Activated naive CD8-positive, alpha-beta T cell treated with anti-CD3 and anti-CD28 coated beads, Interleukin-2, amount 10 ng/mL, durations not matched to agents 7 days and 5 days (primary cell): ENCODE measurements at regions of chr2 and their contacts with region 1.

Region 1: DNA sequence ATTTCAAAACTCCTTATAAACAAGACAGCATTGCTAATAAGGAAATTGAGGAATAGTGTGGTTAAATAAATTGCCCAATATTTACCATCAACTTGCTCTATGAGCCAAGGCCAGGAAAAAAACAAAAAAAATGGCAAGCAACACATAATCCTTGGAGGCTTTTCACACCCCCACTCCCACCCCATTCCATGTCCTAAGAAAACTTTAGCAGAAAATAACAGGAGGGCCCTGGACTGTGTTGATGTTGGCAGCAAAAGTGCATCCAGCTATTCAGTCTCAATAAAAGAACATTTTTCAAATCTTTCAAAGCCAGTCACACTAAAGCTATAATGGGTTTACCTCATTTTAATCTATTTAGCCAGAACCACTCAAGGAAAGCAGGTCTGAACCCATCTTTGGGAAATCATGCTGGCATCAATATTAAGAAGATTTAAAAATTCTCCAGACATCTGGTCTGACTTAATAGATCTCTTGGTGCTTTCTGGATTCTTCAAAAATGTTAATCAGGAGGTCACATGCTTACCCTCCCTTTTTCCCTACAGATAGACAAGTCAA is 34.6 kb upstream of the STK17B start:
- DNase-seq: no peak
- ATAC-seq: no peak
- H3K4me3 Mint-ChIP-seq: no peak overlapping the region
- H3K27ac Mint-ChIP-seq: no peak overlapping the region
- H3K4me1 Mint-ChIP-seq: peaks cover 30% of the 10 kb centered on the region
- H3K27me3 Mint-ChIP-seq: no peaks in the 10 kb centered on the region

Region 2: DNA sequence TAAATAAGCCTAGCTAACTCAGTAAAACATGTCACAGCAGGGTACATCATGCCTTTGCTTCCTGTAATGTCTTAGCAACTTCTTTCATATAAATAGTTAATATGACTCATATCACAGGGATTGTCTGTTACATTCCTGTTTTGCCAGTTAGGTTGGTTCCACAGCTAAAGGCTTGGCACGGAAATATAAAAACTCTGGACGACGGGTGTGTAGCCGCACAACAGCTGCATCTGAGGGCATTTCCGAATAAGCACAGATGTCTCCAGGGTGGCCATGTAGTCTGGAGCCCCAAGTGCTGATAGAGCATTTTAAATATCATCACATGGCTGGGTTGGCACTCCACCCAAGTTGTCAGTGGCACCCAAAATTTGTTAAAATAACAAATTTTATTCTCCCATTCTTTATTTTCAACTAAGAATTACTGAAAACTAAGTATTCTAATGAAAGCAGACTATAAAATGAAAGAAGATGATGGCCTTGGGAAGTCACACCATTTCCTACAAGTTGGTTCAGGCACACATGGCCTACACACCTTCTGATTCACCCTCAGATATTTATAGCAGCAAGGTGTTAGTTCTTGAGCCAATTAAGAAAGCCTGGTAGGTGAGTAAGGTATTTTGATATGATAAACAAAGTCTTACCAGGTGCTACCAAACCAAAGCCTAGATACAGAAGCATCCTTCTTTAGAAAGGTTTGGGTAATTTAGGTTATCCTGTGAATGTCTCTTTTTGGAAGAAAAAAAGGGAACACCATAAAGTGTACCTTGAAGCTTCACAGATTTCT is 27.3 kb after region 1 on chr2:
- POLR2A ChIA-PET with region 1: interaction called, 14 read pairs
- DNase-seq: no peak
- ATAC-seq: no peak
- H3K4me3 Mint-ChIP-seq: peak overlapping the region; percentile 55
- H3K27ac Mint-ChIP-seq: peak overlapping the region; percentile 88
- H3K4me1 Mint-ChIP-seq: peaks cover 82% of the 10 kb centered on the region
- H3K27me3 Mint-ChIP-seq: no peaks in the 10 kb centered on the region

Region 3: DNA sequence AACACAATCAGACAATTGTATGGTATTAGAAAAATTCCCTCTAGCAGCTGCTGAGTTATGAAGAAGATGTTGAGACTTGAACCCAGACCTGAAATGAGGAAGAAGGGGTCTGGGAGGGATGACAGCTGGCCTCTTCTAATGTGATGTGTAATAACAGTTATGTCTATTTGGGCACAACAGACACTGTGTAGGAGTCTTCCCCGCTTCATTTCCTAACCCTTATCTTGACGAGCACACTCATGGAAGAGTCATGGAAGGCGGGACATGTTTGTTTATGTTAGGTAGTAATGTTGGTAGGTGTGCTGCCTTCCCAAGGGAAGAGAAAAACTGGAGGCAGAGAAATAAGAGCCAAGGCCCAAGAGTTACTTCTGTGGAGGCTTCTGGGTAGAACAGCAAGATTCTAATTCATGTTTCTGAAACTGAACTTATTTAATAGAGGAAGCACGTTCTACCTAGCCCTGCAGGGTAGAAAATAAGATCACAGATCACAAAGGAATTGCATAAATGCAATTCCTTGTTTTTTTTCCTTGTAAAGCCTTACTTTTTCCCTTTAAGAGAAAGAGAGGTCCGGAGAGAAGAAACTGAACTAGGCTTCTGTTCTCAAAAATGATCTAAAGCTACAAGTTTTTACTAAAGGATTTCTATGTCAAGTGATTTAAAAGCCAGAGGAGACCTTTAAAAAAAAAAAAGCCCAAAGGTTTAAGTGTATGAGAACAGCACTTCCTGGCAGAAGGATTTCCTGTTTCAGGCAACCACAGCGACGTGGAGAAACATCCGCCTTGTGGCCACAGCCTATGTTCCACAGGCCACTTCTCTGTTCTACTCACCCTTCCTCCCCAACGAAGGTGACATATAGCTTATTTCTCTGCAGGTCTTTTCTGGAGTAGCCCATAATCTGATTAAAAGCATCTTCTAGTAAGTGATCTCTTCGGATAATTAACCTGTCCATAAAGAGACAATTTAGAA is 33.9 kb after region 1 on chr2:
- POLR2A ChIA-PET with region 1: interaction called, 14 read pairs
- DNase-seq: peak; percentile 80
- ATAC-seq: peak; percentile 62
- H3K4me3 Mint-ChIP-seq: peak overlapping the region; percentile 78
- H3K27ac Mint-ChIP-seq: peak overlapping the region; percentile 93
- H3K4me1 Mint-ChIP-seq: peaks cover 70% of the 10 kb centered on the region
- H3K27me3 Mint-ChIP-seq: no peaks in the 10 kb centered on the region

Region 4: DNA sequence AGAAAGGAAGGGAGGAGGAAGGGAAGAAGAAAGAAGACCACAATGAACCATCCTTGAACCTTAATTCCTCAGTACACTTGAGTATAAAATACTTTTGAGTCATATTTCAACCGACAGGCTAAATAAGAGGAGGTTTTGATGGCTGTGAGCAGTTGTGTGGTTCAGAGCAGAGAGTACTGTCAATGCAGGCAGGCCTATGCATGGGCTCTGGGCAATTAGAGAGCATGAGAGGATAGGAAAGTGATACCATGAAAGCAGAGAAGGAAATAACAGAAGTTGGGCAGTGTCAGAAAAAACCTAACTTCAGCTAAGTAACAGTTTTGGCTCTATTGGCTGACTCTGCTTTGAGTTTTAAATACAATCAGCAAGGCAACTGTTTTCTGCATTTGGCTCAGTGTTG is 89.0 kb after region 1 on chr2:
- POLR2A ChIA-PET with region 1: no interaction called
- DNase-seq: no peak
- ATAC-seq: no peak
- H3K4me3 Mint-ChIP-seq: no peak overlapping the region
- H3K27ac Mint-ChIP-seq: no peak overlapping the region
- H3K4me1 Mint-ChIP-seq: peaks cover 23% of the 10 kb centered on the region
- H3K27me3 Mint-ChIP-seq: no peaks in the 10 kb centered on the region